Left ventricle myocardium inferior (tissue), 1 donor: ENCODE measurements at regions of chr17 and their contacts with region 1.

Region 1: DNA sequence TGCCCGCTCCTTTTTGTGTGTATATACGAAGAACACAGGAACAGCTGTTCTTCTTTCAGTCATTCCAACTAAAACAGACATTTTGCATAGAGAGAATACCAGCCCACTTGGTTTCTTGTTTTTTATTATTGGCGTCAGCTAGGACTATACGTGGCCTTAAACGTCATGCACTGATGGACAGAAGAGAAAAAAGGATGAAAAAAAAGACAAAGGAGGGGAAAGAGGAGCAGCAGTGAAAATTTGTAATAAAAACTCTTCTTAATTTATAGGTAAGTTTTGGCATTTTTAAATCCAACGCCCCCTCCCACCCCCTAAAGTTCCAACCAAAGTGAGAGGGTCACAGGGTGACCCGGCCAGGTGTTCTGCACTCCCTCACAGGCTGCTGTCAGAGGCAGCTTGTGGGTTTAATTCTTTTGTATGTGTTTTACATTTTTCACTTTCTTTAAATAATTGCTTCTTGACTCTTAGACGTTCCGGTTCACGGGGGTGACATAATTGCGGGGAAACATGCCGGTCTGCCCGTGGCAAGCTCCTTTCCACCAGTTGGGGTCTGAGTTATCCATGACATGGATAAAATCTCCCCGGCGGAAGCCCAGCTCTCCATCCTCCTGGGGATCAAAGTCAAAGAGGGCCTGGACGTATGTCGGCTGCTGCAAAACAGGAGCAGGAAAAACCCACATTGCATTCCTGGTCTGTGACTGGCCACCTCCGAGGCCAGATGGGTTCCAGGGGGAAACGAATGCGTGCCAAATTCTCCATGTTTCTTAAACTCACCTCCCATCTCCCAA is 30.9 kb upstream of the SLC25A19 start:
- DNase-seq: no peak
- H3K4me3 ChIP-seq: no peak overlapping the region
- H3K27ac ChIP-seq: no peak overlapping the region
- H3K4me1 ChIP-seq: peaks cover 12% of the 10 kb centered on the region
- H3K27me3 ChIP-seq: no peaks in the 10 kb centered on the region
- CTCF ChIP-seq: no peak

Region 2: GRCh38 chr17:75404181-75404730 is 84.2 kb after region 1 on chr17:
- intact Hi-C with region 1: loop called (anchors 5 kb)
- DNase-seq: peak; percentile 30
- H3K4me3 ChIP-seq: peak overlapping the region; percentile 100
- H3K27ac ChIP-seq: peak overlapping the region; percentile 97
- H3K4me1 ChIP-seq: peaks cover 59% of the 10 kb centered on the region
- H3K27me3 ChIP-seq: no peaks in the 10 kb centered on the region
- CTCF ChIP-seq: peak; percentile 81